Activated CD4-positive, alpha-beta T cell treated with anti-CD3 and anti-CD28 coated beads for 36 hours (primary cell): ENCODE measurements at regions of chr1 and their contacts with region 1.

Region 1: DNA sequence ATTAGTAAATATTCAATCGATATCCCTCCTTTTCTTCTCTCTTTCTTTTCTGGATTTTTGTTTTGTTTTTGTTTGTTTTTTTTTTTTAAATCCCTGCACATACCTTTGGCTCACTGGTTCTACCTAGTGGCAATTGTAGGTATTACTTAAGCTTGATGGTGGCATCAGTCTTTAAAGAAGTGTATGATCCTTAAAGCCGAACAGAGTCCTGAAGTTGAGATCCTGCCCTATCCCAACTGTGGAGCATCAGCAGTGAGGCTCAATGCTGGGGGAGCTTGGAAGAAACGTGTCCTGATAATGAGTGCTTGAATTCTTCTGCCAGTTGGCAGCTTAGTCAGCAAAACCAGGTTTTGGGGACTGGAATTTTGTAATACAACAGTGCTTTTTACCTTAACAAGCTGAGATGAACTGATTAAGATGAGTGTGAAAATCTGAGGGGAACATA is 60.8 kb downstream of the FASLG start:
- DNase-seq: no peak
- ATAC-seq: peak; percentile 51
- H3K4me3 Mint-ChIP-seq: no peak overlapping the region
- H3K27ac Mint-ChIP-seq: no peak overlapping the region
- H3K4me1 Mint-ChIP-seq: peaks cover 35% of the 10 kb centered on the region
- H3K27me3 Mint-ChIP-seq: peaks cover 6% of the 10 kb centered on the region

Region 2: DNA sequence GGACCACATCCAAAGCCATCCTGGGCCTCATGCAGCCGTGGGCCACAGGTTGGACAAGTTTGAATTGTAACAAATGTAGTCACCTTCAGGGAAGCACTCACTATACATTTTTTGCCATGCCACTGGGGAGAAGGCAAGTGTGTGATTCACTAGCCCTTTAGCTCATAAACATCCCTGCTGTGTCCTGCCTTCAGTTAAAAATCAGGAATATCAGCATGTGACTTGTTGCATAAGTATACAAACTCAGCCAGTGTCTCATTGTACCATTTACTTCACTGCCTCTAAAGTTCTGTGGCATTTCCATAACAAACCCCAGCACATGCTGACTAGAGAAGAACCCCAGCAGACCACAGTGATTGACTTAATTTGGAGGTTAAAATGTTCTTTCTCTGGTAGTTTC is 441.2 kb before region 1 on chr1:
- CTCF ChIA-PET with region 1: no interaction called
- POLR2A ChIA-PET with region 1: no interaction called
- intact Hi-C with region 1: loop called in 1 of 2 experiments (anchors 10 kb)
- DNase-seq: no peak
- ATAC-seq: no peak
- H3K4me3 Mint-ChIP-seq: no peak overlapping the region
- H3K27ac Mint-ChIP-seq: no peak overlapping the region
- H3K4me1 Mint-ChIP-seq: peaks cover 13% of the 10 kb centered on the region
- H3K27me3 Mint-ChIP-seq: no peaks in the 10 kb centered on the region

Region 3: DNA sequence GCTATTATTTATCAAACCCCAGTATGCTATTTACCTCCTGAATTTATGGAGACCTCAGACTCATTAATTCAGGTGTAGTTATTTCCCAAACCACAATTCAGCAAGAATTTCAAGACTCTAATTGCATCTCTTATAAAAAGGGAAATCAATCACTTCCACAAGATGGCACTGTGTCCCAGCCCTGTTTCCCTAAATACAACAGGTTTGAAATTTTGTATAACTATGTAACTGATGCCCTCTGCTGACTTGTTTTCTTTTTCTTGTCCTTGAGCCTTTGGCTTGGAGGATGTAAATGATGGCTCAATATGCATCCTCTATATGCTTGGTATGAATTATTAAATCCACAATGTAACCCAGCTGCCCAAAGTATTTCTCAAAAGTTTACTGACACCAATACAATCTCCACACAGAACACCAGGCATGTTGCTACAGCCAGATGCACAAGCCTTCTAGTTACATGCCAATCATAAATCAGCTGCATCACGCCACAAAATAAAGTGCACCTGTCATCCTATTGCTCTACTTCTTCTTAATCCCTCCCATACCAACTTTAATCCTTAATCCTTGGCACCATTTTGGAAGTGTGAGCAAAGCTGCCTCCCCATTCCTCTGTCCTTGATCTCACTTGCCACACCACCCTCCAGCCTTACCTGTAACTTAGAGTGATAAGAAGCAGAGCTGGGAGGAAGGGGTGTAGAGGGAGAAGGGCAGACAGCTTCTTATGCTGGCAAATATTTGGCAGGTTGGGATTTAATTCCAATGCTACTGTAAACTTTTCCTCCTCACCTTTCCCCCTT is 290.2 kb before region 1 on chr1:
- CTCF ChIA-PET with region 1: interaction called, 14 read pairs
- POLR2A ChIA-PET with region 1: no interaction called
- intact Hi-C with region 1: no loop called
- DNase-seq: peak; percentile 66
- ATAC-seq: peak; percentile 71
- H3K4me3 Mint-ChIP-seq: no peak overlapping the region
- H3K27ac Mint-ChIP-seq: no peak overlapping the region
- H3K4me1 Mint-ChIP-seq: peaks cover 30% of the 10 kb centered on the region
- H3K27me3 Mint-ChIP-seq: no peaks in the 10 kb centered on the region

Region 4: GRCh38 chr1:172449585-172450534 is 269.9 kb before region 1 on chr1:
- CTCF ChIA-PET with region 1: interaction called, 24 read pairs
- POLR2A ChIA-PET with region 1: no interaction called
- intact Hi-C with region 1: loop called in 1 of 2 experiments (anchors 1 kb)
- DNase-seq: peak; percentile 57
- ATAC-seq: peak; percentile 78
- H3K4me3 Mint-ChIP-seq: no peak overlapping the region
- H3K27ac Mint-ChIP-seq: no peak overlapping the region
- H3K4me1 Mint-ChIP-seq: peaks cover 23% of the 10 kb centered on the region
- H3K27me3 Mint-ChIP-seq: no peaks in the 10 kb centered on the region

Region 5: GRCh38 chr1:172609528-172609927 is 110.2 kb before region 1 on chr1:
- CTCF ChIA-PET with region 1: interaction called, 196 read pairs
- POLR2A ChIA-PET with region 1: no interaction called
- intact Hi-C with region 1: loop called (anchors 1 kb)
- DNase-seq: no peak
- ATAC-seq: no peak
- H3K4me3 Mint-ChIP-seq: no peak overlapping the region
- H3K27ac Mint-ChIP-seq: no peak overlapping the region
- H3K4me1 Mint-ChIP-seq: peaks cover 7% of the 10 kb centered on the region
- H3K27me3 Mint-ChIP-seq: no peaks in the 10 kb centered on the region

Region 6: DNA sequence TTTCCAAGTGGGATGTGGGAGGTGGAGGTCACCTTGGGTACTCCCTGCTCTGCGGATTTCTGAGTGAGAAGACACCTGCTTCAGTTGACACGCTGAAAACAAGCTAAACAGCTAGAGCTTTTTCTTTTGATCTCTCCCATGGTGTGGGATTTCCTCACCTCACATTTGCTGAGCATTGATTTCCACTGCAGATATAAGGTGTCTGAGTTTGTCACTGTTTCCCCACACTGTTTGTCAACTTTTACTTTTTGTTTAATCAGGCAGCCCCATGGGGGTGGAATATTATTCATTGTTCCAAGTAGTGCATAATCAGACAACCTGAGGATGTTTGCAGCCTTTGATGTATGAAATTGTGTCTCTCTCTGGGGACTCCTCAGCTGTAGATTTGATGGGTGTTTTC is 11.3 kb before region 1 on chr1:
- CTCF ChIA-PET with region 1: interaction called, 9 read pairs
- POLR2A ChIA-PET with region 1: interaction called, 12 read pairs
- intact Hi-C with region 1: no loop called
- DNase-seq: peak; percentile 56
- ATAC-seq: peak; percentile 86
- H3K4me3 Mint-ChIP-seq: peak overlapping the region; percentile 37
- H3K27ac Mint-ChIP-seq: peak overlapping the region; percentile 47
- H3K4me1 Mint-ChIP-seq: peaks cover 13% of the 10 kb centered on the region
- H3K27me3 Mint-ChIP-seq: peaks cover 16% of the 10 kb centered on the region

Region 7: DNA sequence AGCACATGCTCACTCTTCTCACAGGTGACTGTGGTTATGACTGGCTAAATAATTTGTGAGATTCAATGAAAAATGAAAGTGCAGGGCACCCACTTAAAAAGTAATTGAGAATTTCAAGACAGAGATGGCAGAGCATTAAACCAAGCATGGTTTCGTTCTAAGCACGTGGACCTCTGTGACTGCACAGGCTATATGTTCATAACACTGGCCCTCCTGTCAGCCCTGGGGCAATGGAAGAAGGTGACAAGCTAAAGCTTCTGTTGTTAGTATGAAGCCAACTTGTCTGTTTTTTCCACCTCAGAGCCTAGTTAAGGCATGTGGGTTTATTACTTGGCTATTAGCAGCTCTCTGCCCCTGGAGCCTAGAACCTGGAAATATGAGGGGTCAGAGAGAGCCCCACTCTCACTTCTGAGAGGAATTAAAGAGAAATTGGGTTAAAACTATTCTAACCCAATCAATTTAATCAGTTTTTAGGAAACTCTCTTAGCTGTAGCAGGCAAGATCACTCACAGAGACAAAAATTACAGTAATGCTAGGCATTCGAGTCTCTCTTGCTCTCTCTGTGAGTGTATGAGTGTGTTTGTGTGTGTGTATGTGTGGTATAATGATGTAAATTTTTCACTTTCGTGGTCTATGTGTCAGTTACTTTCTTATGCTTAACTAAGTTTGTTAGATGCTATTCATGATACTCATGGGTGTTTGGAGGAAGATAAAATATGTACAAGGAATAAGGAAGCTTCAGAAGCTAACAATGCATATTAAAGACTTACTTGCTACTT is 70.3 kb after region 1 on chr1:
- CTCF ChIA-PET with region 1: no interaction called
- POLR2A ChIA-PET with region 1: no interaction called
- intact Hi-C with region 1: no loop called
- DNase-seq: no peak
- ATAC-seq: no peak
- H3K4me3 Mint-ChIP-seq: no peak overlapping the region
- H3K27ac Mint-ChIP-seq: no peak overlapping the region
- H3K4me1 Mint-ChIP-seq: no peaks in the 10 kb centered on the region
- H3K27me3 Mint-ChIP-seq: peaks cover 2% of the 10 kb centered on the region

Region 8: DNA sequence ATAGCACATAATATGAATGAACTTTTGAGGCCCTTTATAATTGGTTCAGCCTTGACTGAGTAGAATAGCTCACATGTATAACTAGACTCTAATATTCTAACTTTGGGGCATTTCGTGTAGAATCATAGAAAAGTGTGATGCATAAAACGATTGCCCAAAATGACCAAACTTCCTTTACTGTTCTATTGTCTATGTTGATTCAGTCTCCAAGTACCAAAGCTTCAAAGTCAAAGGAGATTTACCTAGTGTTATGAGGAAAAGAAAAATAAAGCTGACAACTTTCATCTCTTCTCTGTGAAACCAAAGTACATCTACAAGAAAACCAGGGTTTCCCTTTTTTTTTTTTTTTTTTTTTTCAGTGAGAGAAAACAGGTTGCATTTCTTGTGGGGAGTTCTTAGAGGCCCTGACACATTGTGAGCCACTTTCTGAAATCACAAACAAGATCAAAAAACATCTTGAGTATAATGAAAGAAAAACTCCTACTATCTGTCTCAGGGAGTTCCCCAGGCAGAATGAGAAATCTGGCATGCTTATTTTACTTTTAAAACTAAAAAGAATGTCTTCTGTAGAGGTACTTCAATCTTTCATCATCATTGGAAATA is 147.6 kb after region 1 on chr1:
- CTCF ChIA-PET with region 1: no interaction called
- POLR2A ChIA-PET with region 1: no interaction called
- intact Hi-C with region 1: no loop called
- DNase-seq: peak; percentile 16
- ATAC-seq: peak; percentile 88
- H3K4me3 Mint-ChIP-seq: no peak overlapping the region
- H3K27ac Mint-ChIP-seq: no peak overlapping the region
- H3K4me1 Mint-ChIP-seq: peaks cover 19% of the 10 kb centered on the region
- H3K27me3 Mint-ChIP-seq: peaks cover 21% of the 10 kb centered on the region